ENCODE measurements at regions of chr7 and their contacts with region 1.

Region 1: DNA sequence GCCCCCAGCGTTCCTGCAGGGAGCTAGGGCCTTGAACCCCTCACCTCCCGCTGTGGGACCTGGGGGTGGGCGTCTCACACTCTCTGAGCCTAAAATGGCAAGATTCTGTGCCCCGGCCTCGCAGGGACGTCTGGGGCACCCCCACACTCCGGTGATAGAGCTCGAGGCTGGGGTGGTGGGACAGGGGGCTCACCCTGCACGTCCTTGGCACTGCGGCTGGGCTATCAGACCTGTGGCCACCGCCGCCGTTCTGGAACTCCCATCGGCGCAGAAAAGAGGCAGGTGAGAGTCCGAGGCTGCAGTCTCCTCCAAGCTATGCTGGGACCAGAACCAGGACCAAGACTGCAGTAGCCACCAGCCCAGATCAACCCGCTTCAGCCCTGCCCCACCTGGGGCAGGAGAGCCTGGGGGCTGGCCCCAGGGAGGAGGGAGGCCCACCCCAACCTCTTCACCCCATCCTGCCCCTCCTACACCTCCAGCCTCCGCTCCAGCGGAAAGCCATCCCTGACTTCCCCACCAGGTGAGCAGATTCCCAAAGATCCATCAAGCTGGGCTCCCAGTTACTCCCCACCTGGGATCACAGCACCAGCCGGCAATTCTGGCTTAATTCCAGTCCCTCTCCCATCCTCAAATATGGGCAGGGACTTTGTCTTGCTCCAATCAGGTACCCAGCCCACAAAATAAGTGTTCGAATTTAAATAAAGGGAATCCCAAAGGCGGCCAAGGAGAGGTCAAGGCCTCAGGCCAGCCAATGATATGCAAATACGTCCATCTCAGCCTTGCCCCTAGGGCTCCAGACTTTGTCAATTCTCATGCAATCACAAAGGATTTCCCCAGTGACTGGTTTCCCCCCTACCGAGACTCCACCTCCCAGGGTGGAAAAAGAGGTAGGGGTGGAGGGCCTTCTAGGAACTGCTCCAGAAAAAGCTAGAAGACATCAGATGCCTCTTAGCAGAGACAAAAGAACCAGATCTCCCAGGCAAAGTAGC is 16.4 kb downstream of the TNRC18 start:
- DNase-seq: peak; percentile 47
- H3K4me3 ChIP-seq: no peak overlapping the region
- H3K27ac ChIP-seq: peak overlapping the region; percentile 25
- H3K4me1 ChIP-seq: peaks cover 13% of the 10 kb centered on the region
- H3K27me3 ChIP-seq: no peaks in the 10 kb centered on the region
- CTCF ChIP-seq: no peak

Region 2: DNA sequence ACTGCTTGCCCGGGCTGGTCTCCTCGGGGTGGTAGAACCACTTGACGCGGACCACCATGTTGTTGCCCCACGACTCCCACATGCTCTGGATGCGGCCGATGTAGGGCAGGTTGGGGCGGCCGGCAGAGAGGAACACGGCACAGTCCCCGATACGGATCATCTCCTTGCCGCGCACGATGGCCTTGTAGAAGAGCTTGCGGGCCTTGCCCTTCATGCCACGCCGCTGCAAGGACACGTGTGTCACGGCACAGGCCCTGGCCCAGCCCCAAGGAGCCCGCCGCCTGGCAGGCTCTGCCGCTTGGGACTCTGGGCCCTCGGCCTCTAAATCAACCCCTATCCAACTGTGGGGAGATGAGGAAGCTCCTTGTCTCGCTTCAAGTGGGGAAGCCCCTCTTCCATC is 98.1 kb before region 1 on chr7:
- CTCF ChIA-PET with region 1: no interaction called
- POLR2A ChIA-PET with region 1: interaction called, 14 read pairs
- intact Hi-C with region 1: no loop called
- DNase-seq: no peak
- H3K4me3 ChIP-seq: no peak overlapping the region
- H3K27ac ChIP-seq: no peak overlapping the region
- H3K4me1 ChIP-seq: no peaks in the 10 kb centered on the region
- H3K27me3 ChIP-seq: no peaks in the 10 kb centered on the region
- CTCF ChIP-seq: no peak

Measured in A673 (cell line).